Activated T-helper 1 cell treated with anti-CD3 and anti-CD28 coated beads, Interleukin-12 subunit alpha, Interleukin-12 subunit beta, Interleukin-2, Interleukin-4 antibody, amounts not matched to agents 30 ng/mL and 10 ng/mL and 1 ng/mL, durations not matched to agents 14 hours and 24 hours and 36 hours (primary cell): ENCODE measurements at regions of chr10 and their contacts with region 1.

Region 1: GRCh38 chr10:43304687-43305340 is 37.9 kb upstream of the RASGEF1A start:
- DNase-seq: peak; percentile 47
- H3K4me3 Mint-ChIP-seq: peak overlapping the region; percentile 76
- H3K27ac Mint-ChIP-seq: peak overlapping the region; percentile 73
- H3K4me1 Mint-ChIP-seq: peaks cover 62% of the 10 kb centered on the region
- H3K27me3 Mint-ChIP-seq: no peaks in the 10 kb centered on the region

Region 2: GRCh38 chr10:43287056-43288007 is 17.5 kb before region 1 on chr10:
- intact Hi-C with region 1: loop called (anchors 2 kb)
- DNase-seq: peak; percentile 66
- H3K4me3 Mint-ChIP-seq: peak overlapping the region; percentile 21
- H3K27ac Mint-ChIP-seq: peak overlapping the region; percentile 90
- H3K4me1 Mint-ChIP-seq: peaks cover 52% of the 10 kb centered on the region
- H3K27me3 Mint-ChIP-seq: peaks cover 11% of the 10 kb centered on the region

Region 3: DNA sequence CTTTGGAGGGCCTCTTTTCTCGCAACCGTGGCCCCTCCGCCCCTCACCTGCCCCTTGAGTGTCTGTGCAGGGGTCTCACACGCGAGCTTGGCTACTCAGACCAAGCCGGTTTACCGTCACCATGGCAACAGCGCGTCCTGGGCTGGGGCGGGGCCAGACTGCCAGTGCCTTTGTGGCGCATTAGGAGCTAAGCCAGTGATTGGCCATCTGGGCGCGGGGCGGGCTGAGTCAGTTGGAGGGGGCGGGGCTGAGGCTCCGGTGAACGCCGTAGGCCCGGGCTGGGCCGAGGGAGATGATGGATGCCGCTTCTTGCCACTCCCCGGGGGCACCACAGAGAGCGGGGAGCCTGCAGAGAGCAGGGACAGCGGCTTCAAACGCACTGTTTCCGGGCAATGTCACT is 18.0 kb after region 1 on chr10:
- intact Hi-C with region 1: loop called (anchors 2 kb)
- DNase-seq: peak; percentile 85
- H3K4me3 Mint-ChIP-seq: no peak overlapping the region
- H3K27ac Mint-ChIP-seq: no peak overlapping the region
- H3K4me1 Mint-ChIP-seq: peaks cover 39% of the 10 kb centered on the region
- H3K27me3 Mint-ChIP-seq: peaks cover 15% of the 10 kb centered on the region